ENCODE measurements at regions of chr1 and their contacts with region 1.

Region 1: DNA sequence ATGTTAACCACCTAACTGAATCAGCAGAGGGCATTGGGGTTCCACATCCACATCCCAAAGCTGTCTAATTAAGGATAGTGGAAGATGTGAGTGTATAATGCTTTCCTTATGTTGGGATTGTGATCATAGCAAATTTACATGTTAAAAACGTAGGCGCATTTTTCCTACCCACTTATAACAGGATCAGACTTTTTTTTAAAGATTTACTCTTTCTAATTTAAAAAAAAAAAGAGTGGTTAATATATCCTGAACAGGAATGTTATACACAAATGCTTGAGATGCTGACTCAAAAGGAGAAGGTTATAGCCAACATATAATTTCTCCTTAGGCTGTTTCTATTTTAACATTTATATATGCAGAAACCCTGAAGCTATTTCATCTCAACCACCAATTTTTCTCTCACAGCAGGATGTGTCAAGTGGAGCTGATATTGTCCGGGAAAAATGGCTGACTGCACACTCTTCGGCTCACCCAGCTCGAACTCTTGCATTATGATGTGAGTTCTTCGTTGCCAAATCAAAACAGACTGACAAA is 40.3 kb downstream of the RGS5 start:
- DNase-seq: no peak
- ATAC-seq: no peak
- H3K4me3 ChIP-seq: no peak overlapping the region
- H3K4me3 Mint-ChIP-seq: no peak overlapping the region
- H3K27ac ChIP-seq: no peak overlapping the region
- H3K27ac Mint-ChIP-seq: no peak overlapping the region
- H3K4me1 ChIP-seq: no peaks in the 10 kb centered on the region
- H3K4me1 Mint-ChIP-seq: no peaks in the 10 kb centered on the region
- H3K27me3 ChIP-seq: no peaks in the 10 kb centered on the region
- H3K27me3 Mint-ChIP-seq: no peaks in the 10 kb centered on the region

Region 2: GRCh38 chr1:162984699-162985098 is 177.7 kb before region 1 on chr1:
- CTCF ChIA-PET with region 1: interaction called in 1 of 2 experiments, 18 read pairs
- POLR2A ChIA-PET with region 1: no interaction called
- DNase-seq: no peak
- ATAC-seq: no peak
- H3K4me3 ChIP-seq: no peak overlapping the region
- H3K4me3 Mint-ChIP-seq: no peak overlapping the region
- H3K27ac ChIP-seq: no peak overlapping the region
- H3K27ac Mint-ChIP-seq: no peak overlapping the region
- H3K4me1 ChIP-seq: no peaks in the 10 kb centered on the region
- H3K4me1 Mint-ChIP-seq: no peaks in the 10 kb centered on the region
- H3K27me3 ChIP-seq: peaks cover 0 to 4% of the 10 kb centered on the region in 2 experiments
- H3K27me3 Mint-ChIP-seq: peaks cover 23 to 24% of the 10 kb centered on the region in 2 donors